ENCODE measurements at regions of chr15 and their contacts with region 1.

Region 1: DNA sequence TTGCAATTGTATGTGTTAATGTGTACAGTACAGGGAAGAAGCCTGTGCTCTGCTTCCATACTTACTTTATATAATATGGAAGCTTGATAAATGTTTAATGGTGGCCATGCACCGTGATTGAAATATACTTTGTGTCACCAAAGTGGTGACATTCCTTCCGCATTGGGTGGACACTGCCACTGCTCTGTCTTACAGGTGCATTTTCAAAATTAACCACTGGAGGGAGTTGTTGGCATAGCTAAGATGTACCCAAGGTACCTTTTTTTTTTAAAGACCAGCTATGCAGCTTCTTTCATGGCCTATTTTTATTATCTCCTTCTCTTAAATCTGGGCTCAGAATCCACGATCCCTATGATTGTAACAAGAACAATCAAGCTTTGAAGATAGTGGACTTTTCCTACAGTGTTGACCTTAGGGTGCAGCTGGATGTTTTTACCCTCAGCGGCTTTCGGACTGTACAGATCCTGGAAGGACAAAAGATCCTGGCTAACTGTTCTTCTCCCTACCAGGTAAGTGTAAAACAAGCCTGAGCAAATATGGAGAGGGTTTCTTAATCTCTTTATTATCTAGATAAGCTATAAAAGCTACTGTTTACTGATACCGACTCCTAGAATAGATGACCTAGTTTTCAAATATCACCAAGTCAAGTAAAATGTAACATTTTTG is 21.6 kb upstream of the PAK6 start:
- DNase-seq: peak; percentile 92
- ATAC-seq: peak; percentile 85
- H3K4me3 ChIP-seq: no peak overlapping the region
- H3K27ac ChIP-seq: no peak overlapping the region
- H3K4me1 ChIP-seq: no peaks in the 10 kb centered on the region
- H3K27me3 ChIP-seq: no peaks in the 10 kb centered on the region
- CTCF ChIP-seq: peak; percentile 94

Region 2: GRCh38 chr15:40044717-40045571 is 172.3 kb before region 1 on chr15:
- CTCF ChIA-PET with region 1: interaction called, 4 read pairs
- POLR2A ChIA-PET with region 1: no interaction called
- intact Hi-C with region 1: loop called (anchors 1 kb)
- DNase-seq: peak; percentile 88
- ATAC-seq: peak; percentile 91
- H3K4me3 ChIP-seq: peak overlapping the region; percentile 57
- H3K27ac ChIP-seq: peak overlapping the region; percentile 12; the same call in 1 of the 2 replicates
- H3K4me1 ChIP-seq: peaks cover 39% of the 10 kb centered on the region
- H3K27me3 ChIP-seq: no peaks in the 10 kb centered on the region
- CTCF ChIP-seq: peak; percentile 99

Region 3: DNA sequence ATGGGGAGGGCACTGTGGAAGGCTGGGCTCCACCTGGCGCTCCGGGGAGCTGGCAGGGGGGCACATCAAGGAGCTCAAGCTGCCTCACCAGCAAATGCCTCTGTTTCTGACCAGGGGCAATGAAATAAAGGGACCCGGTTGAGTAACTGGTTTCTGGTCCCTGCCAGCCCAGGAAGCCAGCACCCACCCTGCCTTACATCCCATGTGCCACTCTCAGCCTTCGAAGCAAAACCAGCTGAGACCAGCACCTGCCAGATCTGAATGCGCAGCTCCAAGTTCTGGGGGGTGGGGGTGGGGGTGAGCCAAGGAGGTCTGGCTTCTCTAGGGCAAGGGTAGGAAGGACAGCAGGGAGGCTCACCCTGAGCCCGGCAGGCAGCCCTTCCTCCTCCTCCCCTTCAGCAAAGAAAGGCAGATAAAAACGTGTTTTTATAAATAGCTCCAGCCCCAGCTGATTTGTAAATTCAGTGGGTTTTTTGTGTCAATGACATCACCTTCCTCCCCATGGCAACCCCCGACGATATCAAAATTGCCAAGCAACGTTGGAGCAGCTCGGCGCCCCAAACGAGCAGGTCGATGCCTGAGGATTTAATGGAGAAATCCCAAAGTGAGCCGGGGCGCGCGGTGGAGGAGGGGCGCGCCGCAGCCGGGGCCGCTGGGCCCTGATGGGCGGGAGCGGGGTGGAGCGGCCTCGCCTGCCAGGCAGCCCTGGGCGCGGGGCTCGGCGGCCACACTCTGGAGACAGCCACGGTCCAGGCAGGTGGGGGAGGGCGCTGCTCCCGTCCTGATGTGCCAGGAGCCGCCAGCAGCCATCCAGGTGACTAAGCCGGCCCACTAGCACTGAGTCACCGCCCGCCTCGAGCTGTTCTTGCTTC is 21.5 kb after region 1 on chr15 and contains the start of gene PAK6:
- CTCF ChIA-PET with region 1: interaction called, 16 read pairs
- POLR2A ChIA-PET with region 1: no interaction called
- intact Hi-C with region 1: no loop called
- DNase-seq: peak; percentile 93
- ATAC-seq: peak; percentile 91
- H3K4me3 ChIP-seq: peak within 1 kb of the TSS; percentile 67
- H3K27ac ChIP-seq: peak within 1 kb of the TSS; percentile 34
- H3K4me1 ChIP-seq: peaks cover 32% of the 10 kb centered on the region
- H3K27me3 ChIP-seq: no peaks in the 10 kb centered on the region
- CTCF ChIP-seq: no peak
- total RNA-seq, gene PAK6: 30.4 TPM in 2 replicates

Measured in PC-3 (cell line).